ENCODE measurements at regions of chr15 and their contacts with region 1.

Region 1: DNA sequence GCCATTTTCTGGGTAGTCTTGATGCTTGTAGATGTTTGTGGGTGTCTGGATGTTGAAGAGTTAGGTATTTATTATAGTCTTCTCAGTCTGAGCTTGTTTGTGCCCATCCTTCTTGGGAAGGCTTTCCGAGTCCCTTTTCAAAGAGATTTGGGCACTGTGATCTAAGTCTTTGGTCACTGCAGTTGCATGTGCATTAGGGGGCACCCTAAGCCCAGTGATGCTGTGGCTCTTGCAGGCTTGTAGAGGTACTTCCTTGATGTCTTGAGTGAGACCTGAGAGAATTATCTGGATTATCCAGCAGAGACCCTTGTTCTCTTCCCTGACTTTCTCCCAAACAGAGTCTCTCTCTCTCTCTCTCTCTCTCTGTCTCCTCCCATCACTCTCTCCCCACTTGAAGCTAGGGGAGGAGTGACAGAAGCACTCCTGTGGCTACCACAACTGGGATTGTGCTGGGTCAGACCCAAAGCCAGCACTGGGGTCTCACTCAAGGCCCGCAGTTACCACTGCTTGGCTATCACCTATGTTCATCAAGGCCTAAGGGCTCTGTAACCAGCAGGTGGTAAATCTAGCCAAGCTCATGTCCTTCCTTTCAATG is 68.5 kb downstream of the TMCO5A start:
- DNase-seq: peak; percentile 54 to 63
- ATAC-seq: peak; percentile 97

Region 2: DNA sequence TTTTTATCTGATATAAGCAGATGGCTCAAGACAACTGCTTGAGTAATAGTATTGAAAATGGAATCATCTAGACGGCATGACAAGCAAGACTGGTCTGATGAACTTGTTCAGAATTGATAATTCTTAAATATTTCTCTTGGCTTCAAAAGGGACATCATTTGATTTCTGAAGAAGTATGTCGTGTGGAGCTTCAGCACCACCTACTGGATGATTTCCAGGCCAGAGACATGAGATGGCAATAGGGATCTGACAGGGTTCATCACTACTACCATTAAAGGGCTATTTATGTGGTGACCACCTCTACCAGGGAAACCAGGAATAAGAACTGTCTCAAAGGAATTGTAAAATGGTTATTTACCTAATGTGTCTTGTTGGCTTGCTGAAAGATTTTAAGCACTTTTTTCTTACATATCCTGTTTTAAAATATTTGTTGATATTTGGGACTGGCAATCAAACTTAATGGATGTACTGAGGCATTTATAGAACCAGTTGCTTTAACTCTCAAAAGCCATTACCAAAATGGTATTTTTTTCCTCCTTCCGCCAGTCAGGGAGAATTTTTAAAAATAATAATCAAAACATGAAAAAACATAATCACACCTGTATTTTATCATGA is 351.4 kb after region 1 on chr15:
- intact Hi-C with region 1: loop called in 1 of 2 experiments (anchors 10 kb)
- DNase-seq: peak; percentile 35 to 65
- ATAC-seq: peak; percentile 80

Region 3: GRCh38 chr15:38389924-38390542 is 387.1 kb after region 1 on chr15:
- intact Hi-C with region 1: loop called in 1 of 2 experiments (anchors 10 kb)
- DNase-seq: peak; percentile 30 to 77
- ATAC-seq: peak; percentile 82

Measured in left colon (tissue), 2 donors.